Activated CD4-positive, alpha-beta memory T cell treated with anti-CD3 and anti-CD28 coated beads, Interleukin-2, amount 10 ng/mL, durations not matched to agents 7 days and 5 days (primary cell): ENCODE measurements at regions of chr6 and their contacts with region 1.

Region 1: DNA sequence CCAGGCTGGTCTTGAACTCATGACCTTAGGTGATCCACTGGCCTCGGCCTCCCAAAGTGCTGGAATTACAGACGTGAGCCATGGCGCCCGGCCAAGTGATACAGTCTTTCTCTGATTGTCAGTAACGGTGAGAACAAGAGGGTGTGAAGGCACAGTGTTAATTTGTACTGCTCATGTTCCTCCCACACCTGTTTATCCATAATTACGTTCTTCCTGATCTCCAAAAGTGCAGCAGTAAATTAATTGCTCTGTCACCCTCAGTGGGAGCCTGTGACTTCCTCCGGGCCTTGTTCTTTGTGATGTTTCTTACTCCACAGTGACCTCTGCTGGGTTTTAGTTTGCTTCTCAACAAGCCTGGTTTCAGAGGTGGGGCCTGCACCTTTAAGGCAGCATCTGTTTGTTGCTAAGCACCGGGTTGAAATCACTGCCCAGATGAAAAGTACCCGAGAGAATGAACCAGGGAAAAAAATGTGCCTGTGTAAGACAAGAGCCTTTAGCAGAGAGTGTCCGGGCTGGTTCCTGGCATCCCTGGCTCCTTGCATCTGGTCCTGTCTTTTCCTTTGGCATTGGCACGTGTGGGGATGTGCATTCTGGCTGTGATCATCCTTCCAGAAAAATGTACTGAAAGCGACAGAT is 89.1 kb upstream of the CLDN20 start:
- DNase-seq: peak; percentile 72
- H3K4me3 Mint-ChIP-seq: no peak overlapping the region
- H3K27ac Mint-ChIP-seq: peak overlapping the region; percentile 9
- H3K4me1 Mint-ChIP-seq: peaks cover 48% of the 10 kb centered on the region
- H3K27me3 Mint-ChIP-seq: no peaks in the 10 kb centered on the region

Region 2: GRCh38 chr6:154675602-154676088 is 499.0 kb before region 1 on chr6:
- CTCF ChIA-PET with region 1: interaction called, 19 read pairs
- POLR2A ChIA-PET with region 1: no interaction called
- DNase-seq: peak; percentile 89
- H3K4me3 Mint-ChIP-seq: no peak overlapping the region
- H3K27ac Mint-ChIP-seq: no peak overlapping the region
- H3K4me1 Mint-ChIP-seq: no peaks in the 10 kb centered on the region
- H3K27me3 Mint-ChIP-seq: no peaks in the 10 kb centered on the region

Region 3: DNA sequence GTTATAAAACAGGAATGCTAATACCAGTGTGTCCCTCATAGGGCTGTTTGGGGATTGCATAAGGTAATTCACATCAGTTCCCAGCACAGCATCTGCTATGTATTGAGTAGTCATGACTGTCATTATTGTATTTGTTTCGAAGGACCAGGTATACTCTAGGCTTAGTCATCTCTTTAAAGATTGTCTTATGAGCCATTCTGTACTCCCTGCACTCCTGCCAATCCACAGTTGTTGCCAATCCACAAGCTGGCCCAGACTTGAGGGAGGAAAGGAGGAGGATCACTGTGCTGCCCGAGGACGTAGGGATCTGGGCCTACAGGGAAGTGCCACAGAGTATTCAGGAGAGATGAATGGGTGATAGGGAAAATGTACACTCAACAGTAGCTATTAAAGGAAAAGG is 292.6 kb before region 1 on chr6:
- CTCF ChIA-PET with region 1: no interaction called
- POLR2A ChIA-PET with region 1: no interaction called
- DNase-seq: no peak
- H3K4me3 Mint-ChIP-seq: no peak overlapping the region
- H3K27ac Mint-ChIP-seq: no peak overlapping the region
- H3K4me1 Mint-ChIP-seq: no peaks in the 10 kb centered on the region
- H3K27me3 Mint-ChIP-seq: no peaks in the 10 kb centered on the region

Region 4: GRCh38 chr6:154928325-154928922 is 246.3 kb before region 1 on chr6:
- CTCF ChIA-PET with region 1: interaction called, 110 read pairs
- POLR2A ChIA-PET with region 1: interaction called, 4 read pairs
- DNase-seq: peak; percentile 69
- H3K4me3 Mint-ChIP-seq: no peak overlapping the region
- H3K27ac Mint-ChIP-seq: no peak overlapping the region
- H3K4me1 Mint-ChIP-seq: peaks cover 7% of the 10 kb centered on the region
- H3K27me3 Mint-ChIP-seq: no peaks in the 10 kb centered on the region

Region 5: GRCh38 chr6:155188707-155189496 is 14.2 kb after region 1 on chr6:
- CTCF ChIA-PET with region 1: interaction called, 9 read pairs
- POLR2A ChIA-PET with region 1: interaction called, 11 read pairs
- DNase-seq: no peak
- H3K4me3 Mint-ChIP-seq: peak overlapping the region; percentile 2
- H3K27ac Mint-ChIP-seq: peak overlapping the region; percentile 30
- H3K4me1 Mint-ChIP-seq: peaks cover 44% of the 10 kb centered on the region
- H3K27me3 Mint-ChIP-seq: no peaks in the 10 kb centered on the region

Region 6: DNA sequence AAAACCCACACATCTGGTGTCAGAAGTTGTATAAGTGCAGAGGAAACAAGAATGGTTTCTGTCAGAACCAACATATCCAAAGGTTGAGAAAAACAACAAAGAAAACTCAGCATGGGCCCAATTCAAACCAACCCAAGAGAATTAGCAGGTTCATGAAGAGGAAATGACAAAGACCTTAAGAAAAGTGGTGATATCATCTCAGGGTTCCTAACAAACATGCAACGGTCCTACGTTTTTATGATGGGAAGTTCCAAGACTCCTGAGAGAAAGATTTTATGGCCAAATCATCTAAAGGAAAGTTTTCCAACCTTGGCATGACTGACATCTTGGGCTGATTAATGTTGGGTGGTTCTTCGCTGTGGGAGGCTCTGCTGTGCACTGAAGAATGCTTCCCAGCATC is 116.6 kb after region 1 on chr6:
- CTCF ChIA-PET with region 1: no interaction called
- POLR2A ChIA-PET with region 1: no interaction called
- DNase-seq: no peak
- H3K4me3 Mint-ChIP-seq: no peak overlapping the region
- H3K27ac Mint-ChIP-seq: no peak overlapping the region
- H3K4me1 Mint-ChIP-seq: peaks cover 8% of the 10 kb centered on the region
- H3K27me3 Mint-ChIP-seq: no peaks in the 10 kb centered on the region

Region 7: DNA sequence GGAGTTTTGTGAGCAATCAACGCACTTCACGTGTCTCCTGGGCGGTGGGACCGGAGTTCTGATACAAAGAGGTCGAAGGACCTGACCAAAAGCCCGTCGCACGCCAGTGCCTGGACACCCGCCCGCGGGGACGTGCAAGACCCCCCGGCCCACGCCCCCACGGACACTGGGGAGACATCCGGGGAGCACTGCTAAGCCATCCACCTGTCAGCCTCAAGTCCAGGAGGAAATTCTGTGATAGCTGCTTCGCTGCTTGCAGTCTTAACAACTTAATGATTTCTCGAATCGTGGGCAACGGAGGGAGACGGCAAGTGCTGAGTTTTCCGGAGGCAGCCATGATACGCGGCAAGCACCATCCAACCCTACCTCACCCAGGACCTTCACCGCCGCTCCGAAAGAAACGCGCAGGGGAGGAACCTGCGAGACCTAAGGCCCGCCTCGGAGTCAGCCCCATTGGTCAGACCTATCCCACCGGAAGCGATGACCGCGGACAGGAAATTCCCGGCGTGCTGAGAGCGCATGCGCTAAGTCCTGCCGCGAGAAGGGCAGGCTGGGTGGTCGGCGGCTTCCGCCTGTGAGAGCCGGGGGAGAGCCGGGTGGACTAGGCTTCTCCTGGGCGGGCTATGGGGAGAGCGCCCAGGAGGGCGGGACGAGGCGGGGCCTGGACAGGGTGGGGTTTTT is 139.5 kb after region 1 on chr6 and contains the start of gene TFB1M:
- CTCF ChIA-PET with region 1: interaction called, 27 read pairs
- POLR2A ChIA-PET with region 1: interaction called, 31 read pairs
- DNase-seq: peak; percentile 99
- H3K4me3 Mint-ChIP-seq: peak within 1 kb of the TSS; percentile 85
- H3K27ac Mint-ChIP-seq: peak within 1 kb of the TSS; percentile 92
- H3K4me1 Mint-ChIP-seq: peaks cover 42% of the 10 kb centered on the region
- H3K27me3 Mint-ChIP-seq: no peaks in the 10 kb centered on the region
- total RNA-seq, gene TFB1M: 24.6 to 28.1 TPM